Common myeloid progenitor, CD34-positive (primary cell): ENCODE measurements at regions of chr2 and their contacts with region 1.

Region 1: GRCh38 chr2:216404010-216404618 is 8.2 kb upstream of the SMARCAL1 start:
- DNase-seq: peak; percentile 42 to 58 (median 44)
- H3K4me3 ChIP-seq: no peak overlapping the region
- H3K27ac ChIP-seq: no peak overlapping the region
- H3K4me1 ChIP-seq: peaks cover 5 to 11% (median 9%) of the 10 kb centered on the region in 4 experiments
- H3K27me3 ChIP-seq: no peaks in the 10 kb centered on the region

Region 2: GRCh38 chr2:216222650-216223352 is 181.3 kb before region 1 on chr2:
- CTCF ChIA-PET with region 1: interaction called, 30 read pairs
- POLR2A ChIA-PET with region 1: no interaction called
- DNase-seq: peak; percentile 54 to 85 (median 83)
- H3K4me3 ChIP-seq: peak overlapping the region in 3 of 7 experiments; percentile 12 to 16 (median 14)
- H3K27ac ChIP-seq: peak overlapping the region in 1 of 2 experiments; percentile 16
- H3K4me1 ChIP-seq: peaks cover 29 to 66% (median 61%) of the 10 kb centered on the region in 4 experiments
- H3K27me3 ChIP-seq: no peaks in the 10 kb centered on the region

Region 3: DNA sequence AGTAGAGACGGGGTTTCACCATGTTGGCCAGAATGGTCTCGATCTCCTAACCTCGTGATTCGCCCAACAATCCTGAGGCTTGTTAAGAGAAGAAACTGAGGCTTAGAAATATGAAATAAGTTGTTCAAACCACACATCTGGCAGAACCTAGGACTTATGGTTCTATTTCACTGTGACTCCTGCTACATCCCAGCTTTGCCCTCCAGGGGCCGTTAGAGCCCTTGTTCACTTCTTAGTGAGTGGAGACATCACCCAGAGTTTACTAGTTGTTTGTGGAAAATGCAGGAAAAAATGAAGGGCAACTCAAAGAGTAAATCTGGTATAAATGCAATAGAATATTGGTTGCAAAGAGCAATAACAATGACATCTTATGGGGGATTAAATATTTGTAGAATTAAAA is 75.8 kb before region 1 on chr2:
- CTCF ChIA-PET with region 1: interaction called, 15 read pairs
- POLR2A ChIA-PET with region 1: no interaction called
- DNase-seq: peak in 1 of 3 donors; percentile 49
- H3K4me3 ChIP-seq: no peak overlapping the region
- H3K27ac ChIP-seq: no peak overlapping the region
- H3K4me1 ChIP-seq: no peaks in the 10 kb centered on the region
- H3K27me3 ChIP-seq: no peaks in the 10 kb centered on the region

Region 4: DNA sequence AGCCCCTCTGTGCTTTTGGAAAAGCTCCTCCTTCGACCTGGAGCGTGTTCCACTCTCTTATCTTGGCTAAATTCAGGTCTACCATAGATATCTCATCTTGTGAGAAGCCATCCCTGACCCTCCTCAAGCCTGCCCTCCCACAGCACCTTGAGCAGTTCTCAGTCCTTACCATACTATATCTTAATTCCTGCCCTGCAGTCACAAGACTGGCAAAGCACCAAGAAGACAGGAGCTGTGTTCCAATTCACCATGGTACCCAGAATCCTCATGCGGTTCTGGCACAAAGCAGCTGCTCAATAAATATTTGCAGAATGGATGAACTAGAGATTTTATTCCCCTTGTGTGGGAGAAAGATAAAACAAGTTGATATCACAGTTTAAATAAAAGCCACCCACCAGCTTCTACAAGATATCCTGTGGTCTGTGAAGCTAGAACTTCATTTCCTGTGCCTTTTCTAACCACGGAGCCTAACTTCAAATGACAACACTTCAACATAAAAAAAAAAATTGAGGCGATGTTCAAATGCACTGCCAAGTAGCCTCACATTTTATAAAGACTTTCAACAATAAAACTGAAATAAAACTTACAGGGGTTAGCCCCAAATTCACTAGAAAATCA is 51.4 kb before region 1 on chr2:
- CTCF ChIA-PET with region 1: interaction called, 33 read pairs
- POLR2A ChIA-PET with region 1: no interaction called
- DNase-seq: peak; percentile 78 to 97 (median 95)
- H3K4me3 ChIP-seq: peak overlapping the region in 3 of 7 experiments; percentile 5 to 52 (median 15)
- H3K27ac ChIP-seq: peak overlapping the region; percentile 29 to 58
- H3K4me1 ChIP-seq: peaks cover 6 to 64% (median 50%) of the 10 kb centered on the region in 4 experiments
- H3K27me3 ChIP-seq: no peaks in the 10 kb centered on the region

Region 5: DNA sequence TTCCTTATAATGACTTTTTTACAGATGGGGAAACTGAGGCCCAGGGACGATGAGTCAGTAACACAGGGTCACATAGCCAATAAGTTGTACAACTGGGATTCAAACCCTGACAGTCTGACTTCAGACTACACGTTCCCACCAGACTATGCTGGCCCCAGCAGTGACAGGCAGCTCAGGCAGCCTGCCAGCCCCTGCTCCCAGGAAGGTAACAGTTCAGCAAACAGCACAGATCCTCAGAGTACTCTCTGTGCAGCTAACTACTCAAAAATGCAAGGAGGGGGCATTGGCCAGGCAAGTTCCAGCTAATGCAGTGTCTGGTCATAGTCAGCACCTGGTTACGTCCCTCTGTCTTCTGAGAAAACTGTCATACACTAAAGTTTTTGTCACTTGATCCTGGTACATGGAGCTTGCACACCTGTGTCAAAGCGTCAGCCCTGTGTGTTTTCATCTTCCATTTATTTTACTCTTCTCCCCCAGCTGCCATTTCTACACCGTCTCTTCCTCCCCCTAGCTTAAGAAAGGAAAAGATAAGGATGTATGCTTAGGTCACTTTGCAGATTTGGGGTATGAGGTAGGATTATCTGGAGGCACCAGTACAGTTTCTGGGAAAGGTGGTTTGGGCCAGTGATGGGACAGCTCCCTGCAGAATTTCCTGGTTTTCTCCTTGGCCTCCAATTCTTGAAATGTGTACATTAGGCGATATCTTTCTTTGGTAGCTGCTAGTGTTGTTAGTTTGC is 12.6 kb after region 1 on chr2:
- CTCF ChIA-PET with region 1: interaction called, 30 read pairs
- POLR2A ChIA-PET with region 1: no interaction called
- DNase-seq: peak in 1 of 3 donors; percentile 8
- H3K4me3 ChIP-seq: no peak overlapping the region
- H3K27ac ChIP-seq: peak overlapping the region in 1 of 2 experiments; percentile 1
- H3K4me1 ChIP-seq: peaks cover 0 to 22% (median 18%) of the 10 kb centered on the region in 4 experiments
- H3K27me3 ChIP-seq: no peaks in the 10 kb centered on the region